Spleen (tissue), 13 donors: ENCODE measurements at regions of chr15 and their contacts with region 1.

Region 1: DNA sequence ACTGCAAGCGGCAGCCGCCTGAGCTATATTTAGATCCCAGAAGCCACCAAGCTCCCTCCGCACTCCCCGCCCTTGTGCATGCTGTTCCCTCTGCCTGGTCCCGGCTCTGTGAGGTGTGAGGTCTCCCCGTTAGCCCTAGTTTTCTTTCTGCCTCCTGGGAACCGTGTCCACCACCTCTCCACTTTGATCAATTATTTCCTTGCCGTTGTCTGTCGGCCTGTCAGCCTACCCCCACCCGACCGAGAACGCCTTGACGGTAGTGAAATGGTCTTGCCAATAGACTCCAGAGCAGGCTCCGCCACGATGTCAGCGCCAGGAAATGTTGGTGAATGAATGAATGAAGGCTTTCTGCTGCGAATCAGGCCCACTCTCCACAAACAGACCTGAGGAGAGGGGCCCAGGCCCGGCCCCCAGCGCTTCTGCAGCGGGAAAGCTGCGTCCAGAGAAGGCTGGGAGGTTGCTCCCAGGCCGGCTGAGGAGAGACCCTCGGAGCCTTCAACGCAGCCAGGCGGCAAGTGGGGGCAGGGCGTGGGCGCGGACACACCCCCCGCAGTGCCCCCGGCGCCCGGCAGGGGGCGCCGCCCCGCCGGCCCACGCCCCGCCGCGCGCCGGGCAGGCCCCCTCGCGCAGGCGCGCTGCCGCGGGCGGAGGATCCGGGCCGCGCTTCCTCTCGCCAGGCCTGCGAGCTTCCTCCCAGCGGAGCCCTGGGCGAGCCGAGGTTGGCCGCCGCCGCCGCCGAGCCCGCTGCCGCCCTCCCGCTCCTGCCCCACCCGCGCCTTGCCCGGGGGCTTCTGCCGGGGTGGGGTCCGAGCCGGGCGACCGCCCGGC is at the start of gene CSK:
- DNase-seq: peak; percentile 96
- H3K4me3 ChIP-seq: peak within 1 kb of the TSS; percentile 82 to 98 (median 86)
- H3K27ac ChIP-seq: peak within 1 kb of the TSS; percentile 89 to 99 (median 96)
- H3K4me1 ChIP-seq: peaks cover 75 to 93% (median 89%) of the 10 kb centered on the region in 6 donors
- H3K27me3 ChIP-seq: no peaks in the 10 kb centered on the region
- CTCF ChIP-seq: peak; percentile 26 to 86 (median 75)
- POLR2A ChIP-seq: no peak
- total RNA-seq, gene CSK: 121 to 281 (median 197) TPM

Region 2: GRCh38 chr15:74540761-74541493 is 240.7 kb before region 1 on chr15 and contains the start of gene ARID3B:
- intact Hi-C with region 1: no loop called
- DNase-seq: peak; percentile 98
- H3K4me3 ChIP-seq: peak within 1 kb of the TSS; percentile 79 to 92 (median 87)
- H3K27ac ChIP-seq: peak within 1 kb of the TSS; percentile 77 to 95 (median 92)
- H3K4me1 ChIP-seq: peaks cover 24 to 64% (median 47%) of the 10 kb centered on the region in 6 donors
- H3K27me3 ChIP-seq: no peaks in the 10 kb centered on the region
- CTCF ChIP-seq: peak in 2 of 11 experiments; percentile 14 to 32
- POLR2A ChIP-seq: peak in 1 of 3 donors; percentile 45
- total RNA-seq, gene ARID3B: 14.5 to 25.2 (median 16.3) TPM

Region 3: GRCh38 chr15:74725845-74726773 is 55.5 kb before region 1 on chr15:
- intact Hi-C with region 1: no loop called
- DNase-seq: peak; percentile 85
- H3K4me3 ChIP-seq: peak overlapping the region; percentile 36 to 81 (median 54)
- H3K27ac ChIP-seq: peak overlapping the region in 1 of 8 donors; percentile 28
- H3K4me1 ChIP-seq: peaks cover 15 to 22% (median 17%) of the 10 kb centered on the region in 6 donors
- H3K27me3 ChIP-seq: peaks cover 0 to 58% (median 21%) of the 10 kb centered on the region in 7 donors
- CTCF ChIP-seq: no peak
- POLR2A ChIP-seq: no peak

Region 4: GRCh38 chr15:74842581-74843444 is 61.2 kb after region 1 on chr15 and contains the start of gene ULK3:
- intact Hi-C with region 1: loop called (anchors 5 kb)
- DNase-seq: peak; percentile 99
- H3K4me3 ChIP-seq: peak within 1 kb of the TSS; percentile 71 to 95 (median 89)
- H3K27ac ChIP-seq: peak within 1 kb of the TSS; percentile 76 to 92 (median 88)
- H3K4me1 ChIP-seq: peaks cover 16 to 61% (median 47%) of the 10 kb centered on the region in 6 donors
- H3K27me3 ChIP-seq: no peaks in the 10 kb centered on the region
- CTCF ChIP-seq: peak; percentile 54 to 94 (median 81)
- POLR2A ChIP-seq: peak in 1 of 3 donors; percentile 44
- total RNA-seq, gene ULK3: 51.7 to 74.6 (median 57.7) TPM

Region 5: GRCh38 chr15:75201609-75202250 is 420.1 kb after region 1 on chr15 and contains the start of gene C15orf39:
- intact Hi-C with region 1: loop called (anchors 10 kb)
- DNase-seq: peak; percentile 95
- H3K4me3 ChIP-seq: peak within 1 kb of the TSS; percentile 60 to 98 (median 93)
- H3K27ac ChIP-seq: peak within 1 kb of the TSS; percentile 91 to 97 (median 96)
- H3K4me1 ChIP-seq: peaks cover 30 to 81% (median 53%) of the 10 kb centered on the region in 6 donors
- H3K27me3 ChIP-seq: no peaks in the 10 kb centered on the region
- CTCF ChIP-seq: peak; percentile 58 to 99 (median 95)
- POLR2A ChIP-seq: peak; percentile 19 to 95 (median 88)
- total RNA-seq, gene C15orf39: 56.0 to 70.2 (median 67.6) TPM